ENCODE measurements at regions of chr4 and their contacts with region 1.

Region 1: GRCh38 chr4:104901438-104901837 is 245.2 kb upstream of the TET2 start:
- DNase-seq: no peak
- ATAC-seq: no peak
- H3K4me3 ChIP-seq: no peak overlapping the region
- H3K27ac ChIP-seq: no peak overlapping the region
- H3K4me1 ChIP-seq: no peaks in the 10 kb centered on the region
- H3K27me3 ChIP-seq: no peaks in the 10 kb centered on the region
- CTCF ChIP-seq: no peak

Region 2: GRCh38 chr4:104930298-104930697 is 28.9 kb after region 1 on chr4:
- CTCF ChIA-PET with region 1: no interaction called
- POLR2A ChIA-PET with region 1: no interaction called
- in situ Hi-C with region 1: no loop called
- intact Hi-C with region 1: no loop called
- DNase-seq: no peak
- ATAC-seq: no peak
- H3K4me3 ChIP-seq: no peak overlapping the region
- H3K27ac ChIP-seq: no peak overlapping the region
- H3K4me1 ChIP-seq: no peaks in the 10 kb centered on the region
- H3K27me3 ChIP-seq: no peaks in the 10 kb centered on the region
- CTCF ChIP-seq: no peak

Region 3: DNA sequence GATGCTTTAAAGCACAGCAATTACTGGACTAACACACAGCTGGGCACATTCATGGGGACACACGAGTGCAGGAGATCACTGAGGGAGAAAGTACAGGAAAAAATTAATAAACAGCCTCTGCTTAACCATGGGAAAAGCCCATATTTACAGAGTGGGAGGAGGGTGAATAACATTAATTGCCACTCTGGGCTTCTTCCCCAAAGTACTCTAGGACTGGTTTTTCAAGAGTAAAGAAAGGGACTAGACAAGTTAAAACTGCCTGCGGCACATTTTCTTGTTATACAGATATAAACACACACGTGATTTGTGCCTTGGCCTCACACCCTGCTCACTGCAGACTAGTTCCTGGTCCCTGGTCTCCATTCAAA is 65.6 kb after region 1 on chr4:
- CTCF ChIA-PET with region 1: no interaction called
- POLR2A ChIA-PET with region 1: interaction called, 15 read pairs
- in situ Hi-C with region 1: no loop called
- intact Hi-C with region 1: no loop called
- DNase-seq: no peak
- ATAC-seq: no peak
- H3K4me3 ChIP-seq: no peak overlapping the region
- H3K27ac ChIP-seq: no peak overlapping the region
- H3K4me1 ChIP-seq: no peaks in the 10 kb centered on the region
- H3K27me3 ChIP-seq: no peaks in the 10 kb centered on the region
- CTCF ChIP-seq: no peak

Region 4: GRCh38 chr4:105135785-105136184 is 234.3 kb after region 1 on chr4:
- CTCF ChIA-PET with region 1: no interaction called
- POLR2A ChIA-PET with region 1: interaction called, 11 read pairs
- in situ Hi-C with region 1: no loop called
- intact Hi-C with region 1: no loop called
- DNase-seq: no peak
- ATAC-seq: no peak
- H3K4me3 ChIP-seq: no peak overlapping the region
- H3K27ac ChIP-seq: no peak overlapping the region
- H3K4me1 ChIP-seq: no peaks in the 10 kb centered on the region
- H3K27me3 ChIP-seq: no peaks in the 10 kb centered on the region
- CTCF ChIP-seq: no peak

Measured in Panc1 (cell line).